AG04449 (cell line): ENCODE measurements at regions of chr6 and their contacts with region 1.

Region 1: GRCh38 chr6:151765444-151765886 is 42.0 kb upstream of the ESR1 start:
- DNase-seq: peak; percentile 29
- H3K4me3 ChIP-seq: no peak overlapping the region
- CTCF ChIP-seq: peak; percentile 56

Region 2: GRCh38 chr6:152094992-152095592 is 329.6 kb after region 1 on chr6:
- CTCF ChIA-PET with region 1: interaction called, 11 read pairs
- POLR2A ChIA-PET with region 1: interaction called, 3 read pairs
- DNase-seq: peak; percentile 99
- H3K4me3 ChIP-seq: no peak overlapping the region
- CTCF ChIP-seq: no peak

Region 3: GRCh38 chr6:152117156-152118133 is 352.0 kb after region 1 on chr6:
- CTCF ChIA-PET with region 1: interaction called, 37 read pairs
- POLR2A ChIA-PET with region 1: no interaction called
- DNase-seq: no peak
- H3K4me3 ChIP-seq: no peak overlapping the region
- CTCF ChIP-seq: no peak

Region 4: GRCh38 chr6:152124429-152125074 is 359.1 kb after region 1 on chr6:
- CTCF ChIA-PET with region 1: interaction called, 79 read pairs
- POLR2A ChIA-PET with region 1: no interaction called
- DNase-seq: no peak
- H3K4me3 ChIP-seq: no peak overlapping the region
- CTCF ChIP-seq: peak; percentile 58

Region 5: DNA sequence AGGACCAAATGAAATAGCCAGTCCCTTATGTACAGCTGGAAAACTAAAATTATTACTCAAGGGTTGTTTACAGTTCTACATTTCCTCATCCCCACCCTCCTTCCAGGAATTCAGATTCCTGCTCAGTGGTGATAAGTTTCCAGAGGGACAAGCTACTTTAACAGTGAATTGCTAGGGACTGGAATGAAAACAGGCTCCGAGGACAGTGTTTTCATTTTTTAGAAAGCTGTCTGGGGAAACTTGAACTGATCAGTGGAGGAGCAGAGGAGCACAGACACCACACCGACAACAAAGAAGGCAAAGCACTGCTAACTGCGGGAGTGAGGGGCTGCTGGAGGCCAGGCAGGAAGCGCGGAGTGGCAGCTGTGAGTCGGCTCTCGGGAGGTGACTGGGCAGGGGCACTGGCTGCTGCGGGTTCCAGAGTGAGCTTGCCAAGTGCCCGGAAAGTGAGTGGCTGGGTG is 364.3 kb after region 1 on chr6:
- CTCF ChIA-PET with region 1: interaction called, 79 read pairs
- POLR2A ChIA-PET with region 1: no interaction called
- DNase-seq: no peak
- H3K4me3 ChIP-seq: no peak overlapping the region
- CTCF ChIP-seq: no peak

Region 6: GRCh38 chr6:152267967-152268845 is 502.7 kb after region 1 on chr6:
- CTCF ChIA-PET with region 1: interaction called, 10 read pairs
- POLR2A ChIA-PET with region 1: no interaction called
- DNase-seq: no peak
- H3K4me3 ChIP-seq: no peak overlapping the region
- CTCF ChIP-seq: peak; percentile 24